B cell (primary cell): ENCODE measurements at regions of chr20 and their contacts with region 1.

Region 1: DNA sequence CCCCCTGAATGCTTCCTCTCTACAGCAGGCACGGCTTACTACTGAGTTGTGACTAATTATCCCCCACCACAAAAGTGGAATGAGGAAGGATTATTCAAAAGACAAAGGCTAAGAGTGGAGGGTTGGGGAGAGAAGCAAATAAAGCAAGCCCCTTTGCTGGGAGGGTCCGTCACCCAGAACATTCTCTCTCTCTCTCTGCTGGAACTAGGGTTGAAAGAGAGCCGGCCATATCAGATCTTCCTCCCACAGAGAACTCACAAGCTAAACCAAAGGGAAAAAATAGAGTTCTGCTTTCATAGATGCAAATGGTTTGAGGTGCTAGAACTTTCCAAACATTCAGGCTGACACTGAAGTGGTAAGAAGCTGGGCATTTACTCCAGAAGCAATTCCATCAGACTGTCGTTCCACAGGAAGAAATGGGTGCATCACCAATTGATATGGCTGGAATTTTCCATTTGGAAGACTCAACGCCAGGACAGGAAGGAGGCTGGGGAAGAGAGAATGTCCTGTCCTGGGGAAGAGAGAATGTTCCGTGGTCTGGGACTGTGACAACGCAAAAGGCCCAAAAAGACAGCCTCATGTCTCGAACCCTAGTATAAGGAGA is 7.9 kb downstream of the ZMYND8 start:
- DNase-seq: peak; percentile 35
- ATAC-seq: peak; percentile 19
- H3K4me3 ChIP-seq: peak overlapping the region in 2 of 5 experiments; percentile 11 to 20
- H3K4me3 Mint-ChIP-seq: no peak overlapping the region
- H3K27ac ChIP-seq: peak overlapping the region; percentile 62 to 90
- H3K27ac Mint-ChIP-seq: no peak overlapping the region
- H3K4me1 ChIP-seq: peaks cover 72 to 77% of the 10 kb centered on the region in 2 donors
- H3K4me1 Mint-ChIP-seq: peaks cover 7% of the 10 kb centered on the region
- H3K27me3 ChIP-seq: no peaks in the 10 kb centered on the region
- H3K27me3 Mint-ChIP-seq: no peaks in the 10 kb centered on the region
- CTCF ChIP-seq: no peak

Region 2: DNA sequence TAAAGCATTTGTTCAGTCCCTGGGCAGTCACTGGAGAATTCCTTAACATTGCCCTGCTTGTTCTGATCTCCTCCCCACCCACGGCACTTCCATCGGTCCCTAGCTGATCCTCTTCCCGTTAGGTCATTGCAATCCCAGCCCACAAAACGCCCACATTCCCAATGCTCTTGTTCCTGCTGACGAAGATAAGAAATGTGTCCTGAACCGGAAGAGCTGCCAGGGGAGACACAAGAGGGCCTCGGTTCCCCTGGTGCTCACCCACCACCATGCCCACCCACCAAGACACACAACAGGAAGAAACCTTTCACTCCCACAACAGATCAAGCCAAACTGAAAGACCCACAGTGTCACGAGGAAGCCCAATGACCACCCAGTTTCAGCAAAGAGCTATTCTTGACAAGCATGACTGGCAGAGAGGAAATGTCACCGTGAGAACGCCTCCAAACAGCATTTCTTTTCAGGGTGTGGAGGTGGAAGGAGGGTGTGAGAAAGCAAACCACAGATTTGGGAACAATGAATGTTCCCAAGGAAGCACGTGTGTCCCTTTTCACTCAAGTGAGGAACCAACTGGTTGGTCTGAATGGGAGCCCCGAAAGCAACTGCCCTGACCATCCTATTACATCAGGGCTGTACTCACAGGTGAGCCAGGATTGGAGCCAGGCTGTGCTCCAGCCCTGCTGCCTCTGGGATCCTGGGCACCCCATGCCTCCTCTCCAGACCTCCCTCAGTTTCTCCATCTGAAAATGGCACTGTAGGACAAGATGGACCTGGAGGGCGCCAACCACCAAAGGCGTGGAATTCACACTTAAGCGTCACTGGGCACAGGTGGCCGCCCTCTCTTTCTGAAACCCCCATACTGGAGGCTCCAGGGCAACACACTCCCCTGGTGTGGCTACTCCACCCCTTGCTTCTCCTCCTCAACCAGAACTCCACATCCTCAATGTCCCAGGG is 89.6 kb before region 1 on chr20:
- CTCF ChIA-PET with region 1: no interaction called
- POLR2A ChIA-PET with region 1: no interaction called
- intact Hi-C with region 1: loop called (anchors 5 kb)
- DNase-seq: peak; percentile 78
- ATAC-seq: peak; percentile 31
- H3K4me3 ChIP-seq: peak overlapping the region in 1 of 5 experiments; percentile 8
- H3K4me3 Mint-ChIP-seq: peak overlapping the region; percentile 81
- H3K27ac ChIP-seq: peak overlapping the region; percentile 75 to 78
- H3K27ac Mint-ChIP-seq: peak overlapping the region; percentile 93
- H3K4me1 ChIP-seq: peaks cover 53 to 62% of the 10 kb centered on the region in 2 donors
- H3K4me1 Mint-ChIP-seq: peaks cover 69% of the 10 kb centered on the region
- H3K27me3 ChIP-seq: no peaks in the 10 kb centered on the region
- H3K27me3 Mint-ChIP-seq: no peaks in the 10 kb centered on the region
- CTCF ChIP-seq: no peak

Region 3: DNA sequence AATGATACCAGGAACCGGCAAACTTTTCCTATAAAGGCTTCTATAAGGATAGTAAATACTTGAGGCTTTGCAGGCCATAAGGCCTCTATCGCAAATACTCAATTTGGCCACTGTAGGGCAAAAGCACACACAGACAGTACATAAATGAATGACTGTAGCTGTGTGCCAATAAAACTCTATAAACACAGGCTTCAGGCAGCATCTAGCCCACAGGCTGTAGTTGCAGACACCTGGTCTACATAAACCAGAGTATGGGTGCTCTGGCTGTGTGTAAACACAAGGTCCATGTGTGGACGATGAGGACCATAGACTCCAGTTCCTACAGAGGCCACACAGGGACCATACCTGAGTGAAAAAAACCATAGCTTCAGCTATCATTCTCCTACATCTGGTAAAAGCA is 44.4 kb before region 1 on chr20:
- CTCF ChIA-PET with region 1: no interaction called
- POLR2A ChIA-PET with region 1: no interaction called
- intact Hi-C with region 1: loop called (anchors 5 kb)
- DNase-seq: no peak
- ATAC-seq: no peak
- H3K4me3 ChIP-seq: no peak overlapping the region
- H3K4me3 Mint-ChIP-seq: no peak overlapping the region
- H3K27ac ChIP-seq: no peak overlapping the region
- H3K27ac Mint-ChIP-seq: no peak overlapping the region
- H3K4me1 ChIP-seq: no peaks in the 10 kb centered on the region
- H3K4me1 Mint-ChIP-seq: peaks cover 1% of the 10 kb centered on the region
- H3K27me3 ChIP-seq: no peaks in the 10 kb centered on the region
- H3K27me3 Mint-ChIP-seq: no peaks in the 10 kb centered on the region
- CTCF ChIP-seq: no peak

Region 4: DNA sequence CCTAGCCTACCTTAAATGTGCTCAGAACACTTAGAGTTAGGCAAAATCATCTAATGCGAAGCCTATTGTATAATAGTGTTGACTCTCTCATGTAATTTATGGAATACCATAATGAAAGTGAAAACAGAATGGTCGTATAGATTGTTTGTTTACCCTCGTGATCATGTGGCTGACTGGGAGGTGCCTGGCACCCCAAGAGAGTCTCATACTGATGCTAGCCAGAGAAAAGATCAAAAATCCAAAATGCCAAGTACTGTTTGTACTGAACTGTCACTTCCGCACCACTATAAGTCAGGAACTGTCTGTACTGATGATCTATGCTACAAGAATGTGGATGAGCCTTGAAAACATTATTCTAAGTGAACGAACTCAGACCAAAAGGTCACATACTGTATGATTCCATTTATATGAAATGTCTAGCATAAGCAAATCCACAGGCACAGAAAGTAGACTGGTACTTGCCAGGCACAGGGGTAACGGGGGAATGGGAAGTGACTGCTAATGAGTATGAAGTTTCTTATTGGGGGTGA is 14.6 kb before region 1 on chr20:
- CTCF ChIA-PET with region 1: interaction called, 4 read pairs
- POLR2A ChIA-PET with region 1: interaction called, 4 read pairs
- intact Hi-C with region 1: loop called (anchors 2 kb)
- DNase-seq: no peak
- ATAC-seq: no peak
- H3K4me3 ChIP-seq: no peak overlapping the region
- H3K4me3 Mint-ChIP-seq: peak overlapping the region; percentile 66
- H3K27ac ChIP-seq: peak overlapping the region in 1 of 2 donors; percentile 3
- H3K27ac Mint-ChIP-seq: peak overlapping the region; percentile 73
- H3K4me1 ChIP-seq: peaks cover 4 to 18% of the 10 kb centered on the region in 2 donors
- H3K4me1 Mint-ChIP-seq: peaks cover 44% of the 10 kb centered on the region
- H3K27me3 ChIP-seq: no peaks in the 10 kb centered on the region
- H3K27me3 Mint-ChIP-seq: no peaks in the 10 kb centered on the region
- CTCF ChIP-seq: no peak

Region 5: DNA sequence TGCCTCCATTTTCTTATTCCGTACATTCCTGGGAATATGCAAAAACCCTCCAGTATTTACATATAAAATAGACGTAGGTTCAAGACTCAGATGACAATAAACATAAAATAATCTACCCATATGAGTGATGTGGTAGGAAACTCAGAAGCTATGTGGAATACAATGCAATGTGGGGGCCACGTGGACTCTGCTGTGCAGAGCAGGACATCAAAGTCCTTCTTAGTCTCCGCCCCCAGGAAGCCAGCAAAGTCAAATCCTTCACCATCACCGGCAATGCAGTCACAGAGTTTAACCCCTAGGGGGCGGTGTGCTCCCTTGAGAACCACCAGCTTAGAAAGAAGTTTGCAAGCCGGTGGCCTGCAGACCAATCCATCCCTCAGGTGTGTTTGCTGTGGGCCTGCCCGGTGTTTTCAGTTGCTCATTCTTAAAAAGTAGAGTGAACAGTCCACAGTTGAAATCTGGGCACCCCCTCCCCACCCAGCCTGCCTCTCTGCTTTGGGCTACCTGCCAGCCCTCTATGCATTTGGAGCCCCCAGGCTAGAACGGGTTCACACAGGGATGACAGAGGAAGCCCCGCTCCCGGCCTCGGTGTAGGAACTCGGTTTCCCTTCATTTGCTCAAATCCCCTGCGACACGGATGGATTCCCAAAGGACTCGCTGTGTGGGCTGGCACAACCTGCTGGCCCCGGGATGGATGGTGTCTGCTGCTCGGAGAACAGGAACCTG is 376.8 kb after region 1 on chr20:
- CTCF ChIA-PET with region 1: no interaction called
- POLR2A ChIA-PET with region 1: no interaction called
- intact Hi-C with region 1: no loop called
- DNase-seq: peak; percentile 89
- ATAC-seq: peak; percentile 13
- H3K4me3 ChIP-seq: no peak overlapping the region
- H3K4me3 Mint-ChIP-seq: no peak overlapping the region
- H3K27ac ChIP-seq: no peak overlapping the region
- H3K27ac Mint-ChIP-seq: peak overlapping the region; percentile 55
- H3K4me1 ChIP-seq: peaks cover 37 to 49% of the 10 kb centered on the region in 2 donors
- H3K4me1 Mint-ChIP-seq: peaks cover 50% of the 10 kb centered on the region
- H3K27me3 ChIP-seq: no peaks in the 10 kb centered on the region
- H3K27me3 Mint-ChIP-seq: no peaks in the 10 kb centered on the region
- CTCF ChIP-seq: peak; percentile 92